Activated T-helper 2 cell treated with anti-CD3 and anti-CD28 coated beads, Interferon-gamma antibody, Interleukin-2, Interleukin-4, amounts not matched to agents 10 μg/mL and 5 μg/mL and 100 μg/mL, durations not matched to agents 14 hours and 24 hours and 36 hours (primary cell): ENCODE measurements at regions of chr12 and their contacts with region 1.

Region 1: DNA sequence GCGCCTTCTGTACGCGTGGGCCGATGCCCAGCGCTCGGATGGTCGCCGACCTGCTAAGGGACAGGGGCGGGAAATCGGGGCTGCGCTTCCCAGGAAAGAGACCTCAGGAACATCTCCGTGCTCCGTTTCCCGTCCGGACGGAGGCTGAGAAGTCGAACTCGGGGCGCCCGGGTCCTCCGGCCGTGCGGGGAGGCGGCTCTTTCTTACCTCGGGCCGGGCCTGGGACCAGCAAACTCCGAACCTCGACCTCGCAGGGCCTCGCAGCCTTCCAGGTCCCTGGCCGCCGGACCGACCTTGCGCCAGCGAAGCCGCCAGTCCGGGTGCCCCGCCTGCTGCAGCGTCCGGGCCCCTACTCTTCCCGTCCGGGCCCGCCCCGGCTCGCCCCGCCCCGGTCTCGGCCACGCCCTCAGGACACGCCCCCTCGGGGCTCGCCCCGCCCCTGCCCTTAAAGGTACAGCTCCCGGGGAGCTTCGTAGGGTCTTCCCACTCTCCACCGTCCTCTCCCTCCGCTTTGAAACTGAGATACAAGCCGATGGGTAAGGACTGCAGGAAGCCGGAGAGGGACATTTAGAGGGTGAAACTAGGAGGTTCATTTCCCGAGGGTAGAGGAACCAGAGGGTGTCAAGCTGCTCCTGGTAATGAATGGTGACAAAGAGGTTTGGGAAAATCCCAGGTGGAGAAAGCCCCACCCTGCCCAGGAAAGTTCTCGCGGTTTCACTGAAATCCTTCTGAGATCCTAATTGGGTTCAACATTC is at the start of gene SLC8B1:
- DNase-seq: peak; percentile 77
- H3K4me3 Mint-ChIP-seq: peak within 1 kb of the TSS; percentile 88
- H3K27ac Mint-ChIP-seq: peak within 1 kb of the TSS; percentile 4
- H3K4me1 Mint-ChIP-seq: peaks cover 15% of the 10 kb centered on the region
- H3K27me3 Mint-ChIP-seq: peaks cover 2% of the 10 kb centered on the region
- total RNA-seq, gene SLC8B1: 20.8 and 23.5 TPM in 2 replicates

Region 2: GRCh38 chr12:112937741-112938719 is 396.9 kb before region 1 on chr12 and contains the start of gene OAS3:
- intact Hi-C with region 1: no loop called
- DNase-seq: peak; percentile 72
- H3K4me3 Mint-ChIP-seq: peak within 1 kb of the TSS; percentile 80
- H3K27ac Mint-ChIP-seq: peak within 1 kb of the TSS; percentile 80
- H3K4me1 Mint-ChIP-seq: peaks cover 40% of the 10 kb centered on the region
- H3K27me3 Mint-ChIP-seq: no peaks in the 10 kb centered on the region
- total RNA-seq, gene OAS3: 27.2 and 29.6 TPM in 2 replicates

Region 3: GRCh38 chr12:113358381-113359132 is 23.6 kb after region 1 on chr12 and contains the start of gene PLBD2:
- intact Hi-C with region 1: loop called (anchors 1 kb)
- DNase-seq: peak; percentile 88
- H3K4me3 Mint-ChIP-seq: peak within 1 kb of the TSS; percentile 85
- H3K27ac Mint-ChIP-seq: peak within 1 kb of the TSS; percentile 59
- H3K4me1 Mint-ChIP-seq: peaks cover 12% of the 10 kb centered on the region
- H3K27me3 Mint-ChIP-seq: peaks cover 1% of the 10 kb centered on the region
- total RNA-seq, gene PLBD2: 16.2 and 18.6 TPM in 2 replicates

Region 4: GRCh38 chr12:113965951-113966797 is 631.2 kb after region 1 on chr12 and contains the start of gene RBM19:
- intact Hi-C with region 1: loop called (anchors 10 kb)
- DNase-seq: peak; percentile 95
- H3K4me3 Mint-ChIP-seq: peak within 1 kb of the TSS; percentile 100
- H3K27ac Mint-ChIP-seq: peak within 1 kb of the TSS; percentile 100
- H3K4me1 Mint-ChIP-seq: peaks cover 48% of the 10 kb centered on the region
- H3K27me3 Mint-ChIP-seq: peaks cover 2% of the 10 kb centered on the region
- total RNA-seq, gene RBM19: 89.6 and 96.8 TPM in 2 replicates